RWPE1 (cell line): ENCODE measurements at regions of chr5 and their contacts with region 1.

Region 1: DNA sequence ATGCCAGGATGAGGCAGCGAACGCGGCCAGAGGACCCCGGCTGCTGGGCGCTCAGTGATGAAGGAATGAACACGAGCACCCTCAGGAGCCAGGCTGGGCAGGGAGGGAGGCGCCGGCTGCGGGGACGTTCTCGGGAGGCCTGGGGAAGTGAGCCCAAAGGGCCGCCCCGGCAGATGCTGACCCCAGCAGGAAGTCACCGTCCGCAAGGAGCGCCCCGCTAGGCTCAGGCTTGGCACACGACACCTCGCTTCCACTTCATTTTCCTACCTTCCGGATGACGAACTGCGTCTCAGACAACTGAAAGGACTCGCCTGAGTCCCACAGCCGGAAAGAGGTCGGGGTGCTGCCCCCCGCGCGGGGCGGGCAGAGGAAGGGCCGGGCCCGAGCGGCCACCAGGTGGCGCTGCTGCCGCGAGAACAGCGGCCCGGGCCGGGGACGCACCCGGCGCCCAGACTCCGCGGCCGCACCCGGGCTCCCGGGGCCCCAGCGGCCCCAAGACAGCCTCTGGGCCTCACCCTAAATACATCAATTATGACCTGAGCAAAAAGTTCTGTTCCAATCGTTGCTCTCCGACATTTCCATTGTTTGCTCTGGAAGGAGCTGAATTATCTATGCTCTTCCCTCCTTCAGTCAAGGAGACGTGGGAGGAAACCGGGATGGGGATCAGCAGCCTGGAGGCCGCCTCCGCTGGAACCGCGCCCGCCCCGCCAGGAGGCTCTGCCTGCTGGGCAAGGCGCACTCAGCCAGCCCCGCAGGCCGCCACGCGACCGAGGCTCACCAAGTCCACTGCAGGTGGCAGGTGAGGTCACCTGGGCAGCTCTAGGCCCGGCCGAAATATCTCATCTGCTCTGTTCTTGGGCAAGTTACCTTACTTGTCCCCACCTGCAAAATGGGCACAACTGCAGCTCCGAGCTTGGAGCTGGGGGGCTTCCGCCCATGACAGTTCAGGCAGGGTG is 107.0 kb downstream of the ZNF354C start:
- DNase-seq: peak; percentile 42
- H3K27ac ChIP-seq: no peak overlapping the region
- CTCF ChIP-seq: peak; percentile 31; the same call in 1 of the 2 replicates

Region 2: GRCh38 chr5:179119415-179120170 is 47.6 kb before region 1 on chr5:
- CTCF ChIA-PET with region 1: no interaction called
- POLR2A ChIA-PET with region 1: no interaction called
- DNase-seq: no peak
- H3K27ac ChIP-seq: no peak overlapping the region
- CTCF ChIP-seq: no peak

Region 3: GRCh38 chr5:179261301-179262125 is 94.3 kb after region 1 on chr5:
- CTCF ChIA-PET with region 1: interaction called, 15 read pairs
- POLR2A ChIA-PET with region 1: no interaction called
- DNase-seq: no peak
- H3K27ac ChIP-seq: no peak overlapping the region
- CTCF ChIP-seq: no peak

Region 4: DNA sequence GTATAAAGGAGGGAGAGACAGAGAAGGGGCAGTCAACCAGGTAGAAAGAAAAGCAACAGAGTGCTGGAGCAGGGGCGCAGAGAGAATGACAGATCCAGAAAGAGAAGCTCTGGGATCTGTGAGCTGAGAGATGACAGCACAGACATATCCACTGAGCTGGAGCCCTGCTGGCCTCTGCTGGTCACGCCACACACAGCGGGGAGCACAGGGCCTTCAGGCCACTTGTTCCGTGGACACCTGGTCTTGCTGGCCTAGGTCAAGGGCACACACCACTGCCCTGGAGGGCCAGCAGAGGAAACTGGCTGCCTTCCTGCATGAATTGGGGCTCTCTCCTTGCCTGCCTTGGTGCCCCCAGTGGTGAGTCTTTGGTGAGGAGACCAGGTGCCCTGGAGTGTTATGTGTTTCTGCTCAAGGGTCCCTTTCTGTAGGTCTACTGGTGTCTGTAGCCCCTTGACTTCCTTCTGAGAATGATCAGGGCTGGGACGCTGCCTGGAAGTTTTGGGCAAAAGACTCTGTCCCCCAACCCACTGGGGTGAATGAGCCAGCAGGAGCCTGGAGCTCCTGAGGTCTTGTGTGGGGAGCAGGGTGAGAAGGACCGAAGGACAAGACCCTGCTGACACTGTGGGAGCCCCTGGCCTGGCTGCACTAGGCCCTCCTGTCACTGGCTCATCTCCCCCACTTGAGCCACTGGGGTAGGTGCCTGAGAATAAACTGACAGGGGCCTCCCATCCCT is 237.3 kb after region 1 on chr5:
- CTCF ChIA-PET with region 1: interaction called, 13 read pairs
- POLR2A ChIA-PET with region 1: no interaction called
- DNase-seq: no peak
- H3K27ac ChIP-seq: no peak overlapping the region
- CTCF ChIP-seq: no peak

Region 5: DNA sequence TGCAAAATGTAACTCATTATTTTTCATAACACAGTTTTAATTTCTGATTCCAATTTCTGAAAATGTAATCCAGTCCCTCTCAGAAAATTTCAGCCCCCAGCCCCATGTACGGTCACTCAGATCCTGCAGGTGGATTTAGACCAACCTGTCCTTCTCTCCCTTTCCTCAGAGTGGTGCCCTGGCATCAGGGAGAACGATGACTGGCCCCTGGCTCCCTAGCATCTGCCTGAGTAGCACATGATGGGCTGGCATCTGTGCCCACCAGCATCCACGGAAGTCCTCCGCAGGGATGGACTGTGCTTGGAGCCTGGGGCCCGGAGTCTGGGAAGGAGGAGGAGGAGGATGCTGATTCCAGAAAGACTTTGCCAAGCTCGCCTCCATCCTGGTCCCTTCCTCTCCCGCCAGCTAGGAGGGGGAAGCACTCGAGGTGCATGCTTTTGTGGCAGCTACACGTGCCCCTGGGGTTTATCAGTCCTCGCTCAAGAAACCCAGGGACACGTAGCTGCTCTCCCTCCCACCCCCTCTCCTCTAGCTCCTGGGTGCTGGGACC is 328.8 kb after region 1 on chr5:
- CTCF ChIA-PET with region 1: interaction called, 26 read pairs
- POLR2A ChIA-PET with region 1: no interaction called
- DNase-seq: no peak
- H3K27ac ChIP-seq: no peak overlapping the region
- CTCF ChIP-seq: 0 out of 2 replicates have a peak, but pooled peaks have one; percentile 14